GM18951 (cell line): ENCODE measurements at regions of chr14 and their contacts with region 1.

Region 1: DNA sequence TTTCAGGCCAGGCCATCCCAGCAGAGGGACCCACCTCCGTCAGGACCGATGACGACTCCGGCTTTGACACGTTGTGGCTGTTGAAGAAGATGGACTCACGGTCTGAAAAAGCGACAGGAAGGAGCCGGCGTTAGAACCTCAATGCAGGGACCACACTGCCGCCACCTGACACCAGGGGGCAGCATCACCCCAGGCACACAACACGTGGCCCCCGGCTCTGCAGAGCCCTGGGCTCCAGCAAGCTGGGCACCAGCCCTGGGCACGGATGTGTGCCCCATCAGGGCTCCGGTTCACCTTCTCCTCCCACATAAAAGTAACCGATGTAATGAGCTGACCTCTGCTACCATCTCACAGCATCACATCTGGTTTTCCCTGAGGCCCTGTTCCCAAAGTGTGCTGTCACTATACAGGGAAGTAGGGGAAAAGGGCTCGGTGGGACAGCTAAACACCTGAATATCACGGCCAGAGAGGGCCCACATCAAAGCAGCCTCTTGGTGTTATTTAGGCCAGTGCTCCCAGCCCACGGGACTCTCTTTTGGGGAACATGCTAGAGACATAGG is 29.0 kb downstream of the CHGA start:
- POLR2A ChIP-seq: no peak

Region 2: DNA sequence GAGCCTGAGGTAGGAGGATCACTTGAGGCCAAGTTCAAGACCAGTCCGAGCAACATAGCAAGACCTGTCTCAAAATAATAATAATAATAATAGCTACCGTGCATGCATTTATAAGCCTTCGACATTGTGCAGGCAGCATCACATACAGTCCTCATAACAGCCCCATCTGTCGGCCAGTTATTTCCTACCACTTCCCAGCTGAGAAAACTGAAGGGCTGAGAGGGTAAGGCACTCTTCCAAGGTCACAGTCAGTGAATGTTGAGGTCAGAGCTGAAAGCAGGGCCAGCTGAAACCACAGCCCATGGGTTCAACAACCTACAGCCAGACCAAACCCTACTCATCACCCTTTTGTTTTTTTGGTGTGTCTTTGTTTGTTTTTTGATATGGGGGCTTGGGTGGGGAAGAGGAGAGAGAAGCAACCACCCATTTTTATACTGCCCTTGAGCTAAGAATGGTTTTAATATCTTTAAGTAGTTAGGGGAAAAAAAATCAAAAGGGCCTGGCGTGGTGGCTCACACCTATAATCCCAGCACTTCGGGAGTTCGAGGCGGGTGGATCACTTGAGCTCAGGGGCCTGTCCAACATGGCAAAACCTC is 180.6 kb after region 1 on chr14:
- in situ Hi-C with region 1: loop called (anchors 10 kb)
- POLR2A ChIP-seq: no peak